ENCODE measurements at regions of chr4 and their contacts with region 1.

Region 1: GRCh38 chr4:184825896-184826690 is at the start of gene ACSL1:
- DNase-seq: peak; percentile 56
- H3K4me3 ChIP-seq: peak within 1 kb of the TSS; percentile 53 to 75 (median 75)
- H3K27ac ChIP-seq: peak within 1 kb of the TSS; percentile 55
- H3K4me1 ChIP-seq: peaks cover 15% of the 10 kb centered on the region
- H3K27me3 ChIP-seq: no peaks in the 10 kb centered on the region
- CTCF ChIP-seq: peak in 1 of 2 donors; percentile 5
- total RNA-seq, gene ACSL1: 28.9 to 126 TPM

Region 2: GRCh38 chr4:184424993-184425758 is 400.9 kb before region 1 on chr4:
- CTCF ChIA-PET with region 1: no interaction called
- dilution Hi-C with region 1: no loop called
- in situ Hi-C with region 1: no loop called
- intact Hi-C with region 1: no loop called
- DNase-seq: peak; percentile 61
- H3K4me3 ChIP-seq: no peak overlapping the region
- H3K27ac ChIP-seq: no peak overlapping the region
- H3K4me1 ChIP-seq: peaks cover 12% of the 10 kb centered on the region
- H3K27me3 ChIP-seq: no peaks in the 10 kb centered on the region
- CTCF ChIP-seq: no peak

Region 3: GRCh38 chr4:184845367-184846021 is 19.4 kb after region 1 on chr4:
- CTCF ChIA-PET with region 1: no interaction called
- dilution Hi-C with region 1: no loop called
- in situ Hi-C with region 1: no loop called
- intact Hi-C with region 1: loop called (anchors 1 kb)
- DNase-seq: peak; percentile 99
- H3K4me3 ChIP-seq: no peak overlapping the region
- H3K27ac ChIP-seq: peak overlapping the region; percentile 86
- H3K4me1 ChIP-seq: peaks cover 22% of the 10 kb centered on the region
- H3K27me3 ChIP-seq: no peaks in the 10 kb centered on the region
- CTCF ChIP-seq: no peak

Region 4: GRCh38 chr4:184889666-184890335 is 63.7 kb after region 1 on chr4:
- CTCF ChIA-PET with region 1: no interaction called
- dilution Hi-C with region 1: no loop called
- in situ Hi-C with region 1: no loop called
- intact Hi-C with region 1: no loop called
- DNase-seq: no peak
- H3K4me3 ChIP-seq: no peak overlapping the region
- H3K27ac ChIP-seq: no peak overlapping the region
- H3K4me1 ChIP-seq: no peaks in the 10 kb centered on the region
- H3K27me3 ChIP-seq: no peaks in the 10 kb centered on the region
- CTCF ChIP-seq: no peak

Region 5: GRCh38 chr4:184955651-184956050 is 129.6 kb after region 1 on chr4:
- CTCF ChIA-PET with region 1: no interaction called
- dilution Hi-C with region 1: no loop called
- in situ Hi-C with region 1: no loop called
- intact Hi-C with region 1: no loop called
- DNase-seq: no peak
- H3K4me3 ChIP-seq: no peak overlapping the region
- H3K27ac ChIP-seq: no peak overlapping the region
- H3K4me1 ChIP-seq: peaks cover 9% of the 10 kb centered on the region
- H3K27me3 ChIP-seq: no peaks in the 10 kb centered on the region
- CTCF ChIP-seq: no peak